ENCODE measurements at regions of chr2 and their contacts with region 1.

Region 1: GRCh38 chr2:196926562-196927375 is at the start of gene PGAP1:
- DNase-seq: peak; percentile 81
- H3K4me3 Mint-ChIP-seq: peak within 1 kb of the TSS; percentile 98
- H3K27ac Mint-ChIP-seq: peak within 1 kb of the TSS; percentile 96
- H3K4me1 Mint-ChIP-seq: peaks cover 46% of the 10 kb centered on the region
- H3K27me3 Mint-ChIP-seq: no peaks in the 10 kb centered on the region
- total RNA-seq, gene PGAP1: 39.0 to 42.0 TPM

Region 2: DNA sequence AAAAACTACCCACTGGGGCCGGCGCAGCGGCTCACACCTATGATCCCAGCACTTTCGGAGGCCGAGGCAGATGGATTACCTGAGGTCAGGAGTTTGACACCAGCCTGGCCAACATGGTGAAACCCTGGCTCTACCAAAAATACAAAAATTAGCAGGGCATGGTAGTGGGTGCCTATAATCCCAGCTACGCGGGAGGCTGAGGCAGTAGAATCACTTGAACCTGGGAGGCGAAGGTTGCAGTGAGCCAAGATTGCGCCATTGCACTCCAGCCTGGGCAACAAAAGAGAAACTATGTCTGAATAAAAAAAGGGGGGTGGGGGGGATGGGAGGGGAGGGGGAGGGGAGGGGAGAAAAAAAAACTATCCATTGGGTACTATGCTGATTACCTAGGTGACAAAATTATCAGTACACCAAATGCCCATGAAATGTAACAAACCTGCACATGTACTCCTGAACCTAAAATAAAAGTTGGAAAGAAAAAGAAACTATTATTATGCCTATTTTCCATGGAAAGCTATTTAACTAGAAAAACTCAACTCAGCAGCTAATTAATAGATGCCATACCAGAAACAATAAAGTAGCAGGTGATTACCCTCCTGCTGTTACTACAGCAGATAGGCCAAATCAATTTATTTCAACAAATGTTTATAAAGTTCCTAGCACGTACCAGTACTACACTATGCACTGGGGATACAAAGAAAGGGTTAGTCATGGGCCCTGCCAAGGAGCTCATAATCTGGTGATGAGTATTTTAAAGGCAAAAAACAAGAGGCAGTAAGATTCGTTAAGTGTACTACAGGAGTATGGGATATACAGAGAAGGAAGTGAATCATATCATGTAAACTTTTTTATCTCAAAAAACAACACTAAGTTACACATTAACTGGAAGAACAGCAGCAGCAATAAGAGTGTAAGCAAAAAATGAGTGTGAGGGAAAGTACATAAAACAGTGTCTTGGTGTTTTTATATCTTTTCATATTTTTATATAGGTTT is 1382.6 kb before region 1 on chr2:
- CTCF ChIA-PET with region 1: no interaction called
- POLR2A ChIA-PET with region 1: interaction called, 14 read pairs
- DNase-seq: no peak
- H3K4me3 Mint-ChIP-seq: peak overlapping the region; percentile 36
- H3K27ac Mint-ChIP-seq: peak overlapping the region; percentile 88
- H3K4me1 Mint-ChIP-seq: peaks cover 75% of the 10 kb centered on the region
- H3K27me3 Mint-ChIP-seq: no peaks in the 10 kb centered on the region

Region 3: DNA sequence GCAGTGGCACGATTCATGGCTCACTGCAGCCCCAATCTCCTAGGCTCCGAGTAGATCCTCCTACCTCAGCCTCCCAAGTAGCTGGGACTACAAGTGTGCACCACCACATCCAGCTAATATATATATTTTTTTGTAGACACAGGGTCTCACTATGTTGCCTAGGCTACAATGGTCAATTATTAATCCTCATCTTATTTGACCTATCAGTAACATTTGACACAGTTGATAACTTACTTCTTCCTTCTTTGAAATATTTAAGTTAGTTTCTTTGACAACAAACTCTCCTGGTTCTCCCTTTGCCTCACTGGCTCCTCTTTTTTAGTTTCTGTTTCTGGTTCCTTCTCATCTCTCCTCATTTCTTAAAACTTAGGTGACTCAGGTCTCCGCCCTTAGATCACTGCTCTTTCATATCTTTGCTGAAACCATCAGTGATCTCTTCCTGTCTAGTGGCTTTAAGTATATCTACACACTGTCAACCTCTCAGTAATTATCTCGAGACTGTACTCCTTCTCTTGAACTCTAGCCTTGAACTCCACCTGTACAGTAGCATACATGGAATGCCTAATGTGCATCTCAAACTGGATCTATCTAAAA is 11.8 kb before region 1 on chr2:
- CTCF ChIA-PET with region 1: interaction called, 7 read pairs
- POLR2A ChIA-PET with region 1: interaction called, 12 read pairs
- DNase-seq: peak; percentile 65
- H3K4me3 Mint-ChIP-seq: peak overlapping the region; percentile 56
- H3K27ac Mint-ChIP-seq: peak overlapping the region; percentile 97
- H3K4me1 Mint-ChIP-seq: peaks cover 60% of the 10 kb centered on the region
- H3K27me3 Mint-ChIP-seq: no peaks in the 10 kb centered on the region

Region 4: GRCh38 chr2:197121255-197121654 is 194.5 kb after region 1 on chr2:
- CTCF ChIA-PET with region 1: no interaction called
- POLR2A ChIA-PET with region 1: no interaction called
- DNase-seq: peak; percentile 35
- H3K4me3 Mint-ChIP-seq: peak overlapping the region; percentile 17
- H3K27ac Mint-ChIP-seq: peak overlapping the region; percentile 78
- H3K4me1 Mint-ChIP-seq: peaks cover 48% of the 10 kb centered on the region
- H3K27me3 Mint-ChIP-seq: no peaks in the 10 kb centered on the region

Measured in activated CD4-positive, alpha-beta T cell treated with anti-CD3 and anti-CD28 coated beads, Interleukin-2, amount 10 ng/mL, durations not matched to agents 7 days and 5 days (primary cell).